A673 (cell line): ENCODE measurements at regions of chr6 and their contacts with region 1.

Region 1: GRCh38 chr6:134347916-134348805 is 30.2 kb upstream of the SGK1 start:
- DNase-seq: no peak
- H3K4me3 ChIP-seq: no peak overlapping the region
- H3K27ac ChIP-seq: no peak overlapping the region
- H3K4me1 ChIP-seq: no peaks in the 10 kb centered on the region
- H3K27me3 ChIP-seq: no peaks in the 10 kb centered on the region
- CTCF ChIP-seq: no peak

Region 2: GRCh38 chr6:133083248-133083967 is 1264.8 kb before region 1 on chr6:
- CTCF ChIA-PET with region 1: no interaction called
- POLR2A ChIA-PET with region 1: no interaction called
- intact Hi-C with region 1: no loop called
- DNase-seq: no peak
- H3K4me3 ChIP-seq: no peak overlapping the region
- H3K27ac ChIP-seq: no peak overlapping the region
- H3K4me1 ChIP-seq: peaks cover 12% of the 10 kb centered on the region
- H3K27me3 ChIP-seq: no peaks in the 10 kb centered on the region
- CTCF ChIP-seq: no peak

Region 3: DNA sequence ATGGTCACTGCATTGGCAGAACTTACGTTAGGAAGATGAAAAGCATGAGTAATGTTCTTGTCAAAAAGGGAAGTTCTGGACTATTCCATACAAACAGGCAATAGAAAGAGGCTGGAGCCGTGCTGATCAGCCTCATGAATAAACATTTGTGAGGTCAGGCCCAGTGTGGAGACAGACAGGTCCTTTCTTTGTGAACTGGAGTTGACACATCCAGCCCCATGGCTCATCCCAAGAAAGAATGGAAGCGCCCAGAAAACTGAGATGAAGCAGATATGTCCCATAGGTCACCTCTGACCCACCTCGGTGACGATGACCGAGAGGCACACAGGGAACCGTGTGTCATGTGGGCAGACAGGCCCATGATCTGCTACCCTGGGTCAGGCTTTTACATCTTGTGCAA is 245.7 kb after region 1 on chr6:
- CTCF ChIA-PET with region 1: no interaction called
- POLR2A ChIA-PET with region 1: no interaction called
- intact Hi-C with region 1: no loop called
- DNase-seq: no peak
- H3K4me3 ChIP-seq: no peak overlapping the region
- H3K27ac ChIP-seq: no peak overlapping the region
- H3K4me1 ChIP-seq: no peaks in the 10 kb centered on the region
- H3K27me3 ChIP-seq: no peaks in the 10 kb centered on the region
- CTCF ChIP-seq: no peak

Region 4: GRCh38 chr6:135324531-135324930 is 976.4 kb after region 1 on chr6:
- CTCF ChIA-PET with region 1: no interaction called
- POLR2A ChIA-PET with region 1: interaction called, 10 read pairs
- intact Hi-C with region 1: no loop called
- DNase-seq: no peak
- H3K4me3 ChIP-seq: no peak overlapping the region
- H3K27ac ChIP-seq: no peak overlapping the region
- H3K4me1 ChIP-seq: no peaks in the 10 kb centered on the region
- H3K27me3 ChIP-seq: no peaks in the 10 kb centered on the region
- CTCF ChIP-seq: no peak